ENCODE measurements at regions of chr11 and their contacts with region 1.

Region 1: GRCh38 chr11:114099392-114100178 is 40.1 kb downstream of the ZBTB16 start:
- DNase-seq: peak in 1 of 9 experiments; percentile 16
- ATAC-seq: peak; percentile 67
- H3K4me3 ChIP-seq: no peak overlapping the region
- H3K4me3 Mint-ChIP-seq: no peak overlapping the region
- H3K27ac ChIP-seq: no peak overlapping the region
- H3K27ac Mint-ChIP-seq: peak overlapping the region; percentile 49
- H3K4me1 ChIP-seq: peaks cover 20% of the 10 kb centered on the region
- H3K4me1 Mint-ChIP-seq: peaks cover 50% of the 10 kb centered on the region
- H3K27me3 ChIP-seq: no peaks in the 10 kb centered on the region
- H3K27me3 Mint-ChIP-seq: no peaks in the 10 kb centered on the region
- CTCF ChIP-seq: no peak

Region 2: DNA sequence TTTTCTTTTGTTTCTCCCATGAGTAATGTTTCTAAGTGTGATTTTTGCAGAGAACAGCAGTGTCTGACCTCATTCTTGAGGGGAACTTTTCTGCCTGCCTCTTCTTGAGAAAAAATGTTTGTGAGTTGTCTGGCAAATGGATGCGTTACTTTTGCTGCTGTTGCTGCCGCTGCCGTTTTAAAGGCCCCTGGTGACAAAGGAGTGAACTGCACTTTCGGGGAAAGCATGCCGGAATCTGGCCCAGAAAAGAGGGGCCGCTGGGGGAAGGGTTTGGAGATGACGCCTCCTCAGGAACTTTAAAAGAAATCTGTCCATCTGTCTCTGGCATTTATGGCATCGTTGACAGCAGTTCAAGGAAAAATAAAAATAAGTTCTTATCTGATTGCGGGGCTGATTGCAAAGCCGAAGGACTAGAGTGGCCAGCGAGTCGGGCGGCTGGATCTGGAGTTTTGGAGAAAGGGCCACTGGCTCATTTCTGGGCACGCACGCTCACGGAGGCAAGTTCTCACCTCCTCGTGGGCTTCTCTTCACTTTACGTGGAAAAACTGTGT is 23.6 kb before region 1 on chr11:
- CTCF ChIA-PET with region 1: no interaction called
- POLR2A ChIA-PET with region 1: no interaction called
- intact Hi-C with region 1: loop called in 1 of 2 experiments (anchors 2 kb)
- DNase-seq: peak in 6 of 9 experiments; percentile 31 to 75 (median 57)
- ATAC-seq: peak; percentile 16
- H3K4me3 ChIP-seq: no peak overlapping the region
- H3K4me3 Mint-ChIP-seq: peak overlapping the region; percentile 40
- H3K27ac ChIP-seq: peak overlapping the region in 1 of 2 experiments; percentile 64
- H3K27ac Mint-ChIP-seq: peak overlapping the region; percentile 38
- H3K4me1 ChIP-seq: peaks cover 48% of the 10 kb centered on the region
- H3K4me1 Mint-ChIP-seq: peaks cover 76% of the 10 kb centered on the region
- H3K27me3 ChIP-seq: no peaks in the 10 kb centered on the region
- H3K27me3 Mint-ChIP-seq: no peaks in the 10 kb centered on the region
- CTCF ChIP-seq: peak; percentile 56

Region 3: GRCh38 chr11:114085965-114086793 is 13.4 kb before region 1 on chr11:
- CTCF ChIA-PET with region 1: no interaction called
- POLR2A ChIA-PET with region 1: no interaction called
- intact Hi-C with region 1: no loop called
- DNase-seq: no peak
- ATAC-seq: no peak
- H3K4me3 ChIP-seq: no peak overlapping the region
- H3K4me3 Mint-ChIP-seq: no peak overlapping the region
- H3K27ac ChIP-seq: peak overlapping the region in 1 of 2 experiments; percentile 12
- H3K27ac Mint-ChIP-seq: no peak overlapping the region
- H3K4me1 ChIP-seq: peaks cover 5% of the 10 kb centered on the region
- H3K4me1 Mint-ChIP-seq: peaks cover 44% of the 10 kb centered on the region
- H3K27me3 ChIP-seq: no peaks in the 10 kb centered on the region
- H3K27me3 Mint-ChIP-seq: peaks cover 16% of the 10 kb centered on the region
- CTCF ChIP-seq: no peak

Region 4: GRCh38 chr11:114141863-114142580 is 42.4 kb after region 1 on chr11:
- CTCF ChIA-PET with region 1: interaction called, 3 read pairs
- POLR2A ChIA-PET with region 1: no interaction called
- intact Hi-C with region 1: loop called in 1 of 2 experiments (anchors 2 kb)
- DNase-seq: no peak
- ATAC-seq: peak; percentile 46
- H3K4me3 ChIP-seq: no peak overlapping the region
- H3K4me3 Mint-ChIP-seq: no peak overlapping the region
- H3K27ac ChIP-seq: no peak overlapping the region
- H3K27ac Mint-ChIP-seq: peak overlapping the region; percentile 47
- H3K4me1 ChIP-seq: peaks cover under 1% of the 10 kb centered on the region
- H3K4me1 Mint-ChIP-seq: peaks cover 33% of the 10 kb centered on the region
- H3K27me3 ChIP-seq: no peaks in the 10 kb centered on the region
- H3K27me3 Mint-ChIP-seq: no peaks in the 10 kb centered on the region
- CTCF ChIP-seq: no peak

Region 5: GRCh38 chr11:115112754-115113153 is 1013.2 kb after region 1 on chr11:
- CTCF ChIA-PET with region 1: no interaction called
- POLR2A ChIA-PET with region 1: no interaction called
- intact Hi-C with region 1: no loop called
- DNase-seq: no peak
- ATAC-seq: no peak
- H3K4me3 ChIP-seq: no peak overlapping the region
- H3K4me3 Mint-ChIP-seq: no peak overlapping the region
- H3K27ac ChIP-seq: no peak overlapping the region
- H3K27ac Mint-ChIP-seq: no peak overlapping the region
- H3K4me1 ChIP-seq: no peaks in the 10 kb centered on the region
- H3K4me1 Mint-ChIP-seq: no peaks in the 10 kb centered on the region
- H3K27me3 ChIP-seq: peaks cover 0 to 4% of the 10 kb centered on the region in 2 experiments
- H3K27me3 Mint-ChIP-seq: no peaks in the 10 kb centered on the region
- CTCF ChIP-seq: no peak